ENCODE measurements at regions of chr3 and their contacts with region 1.

Region 1: GRCh38 chr3:112979240-112979832 is 4.4 kb upstream of the CD200R1 start:
- DNase-seq: peak in 3 of 9 experiments; percentile 37 to 72 (median 66)
- ATAC-seq: peak; percentile 37
- H3K4me3 ChIP-seq: no peak overlapping the region
- H3K4me3 Mint-ChIP-seq: no peak overlapping the region
- H3K27ac ChIP-seq: no peak overlapping the region
- H3K27ac Mint-ChIP-seq: no peak overlapping the region
- H3K4me1 ChIP-seq: peaks cover 38% of the 10 kb centered on the region
- H3K4me1 Mint-ChIP-seq: peaks cover 56% of the 10 kb centered on the region
- H3K27me3 ChIP-seq: no peaks in the 10 kb centered on the region
- H3K27me3 Mint-ChIP-seq: no peaks in the 10 kb centered on the region
- CTCF ChIP-seq: peak; percentile 93

Region 2: DNA sequence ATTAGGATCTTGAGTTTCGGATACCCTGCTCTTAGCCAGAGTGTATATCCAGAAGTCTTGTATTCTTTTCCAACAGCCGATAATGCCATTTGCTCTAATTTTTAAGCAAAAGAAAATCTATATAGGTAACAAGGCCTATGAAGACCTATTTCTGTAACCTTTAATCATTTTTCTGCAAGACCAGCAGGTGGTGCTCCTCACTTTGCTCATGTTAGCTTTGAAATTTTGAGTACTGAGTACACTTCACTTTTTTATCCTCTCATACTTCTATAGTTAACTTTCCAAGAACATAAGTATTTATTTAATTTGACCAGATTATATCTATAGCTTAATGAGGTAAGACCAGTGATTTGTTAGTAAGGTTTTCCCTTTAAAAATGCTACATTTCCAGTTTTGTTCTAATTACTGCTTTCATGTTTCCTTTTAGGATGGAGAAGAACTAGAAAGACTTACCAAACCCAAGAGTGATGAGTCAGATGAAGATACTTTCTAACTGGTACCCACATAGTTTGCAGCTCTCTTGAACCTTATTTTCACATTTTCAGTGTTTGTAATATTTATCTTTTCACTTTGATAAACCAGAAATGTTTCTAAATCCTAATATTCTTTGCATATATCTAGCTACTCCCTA is 397.0 kb before region 1 on chr3:
- CTCF ChIA-PET with region 1: interaction called, 4 read pairs
- POLR2A ChIA-PET with region 1: no interaction called
- intact Hi-C with region 1: loop called (anchors 1 to 2 kb)
- DNase-seq: peak in 4 of 9 experiments; percentile 6 to 53 (median 34)
- ATAC-seq: peak; percentile 42
- H3K4me3 ChIP-seq: no peak overlapping the region
- H3K4me3 Mint-ChIP-seq: no peak overlapping the region
- H3K27ac ChIP-seq: no peak overlapping the region
- H3K27ac Mint-ChIP-seq: no peak overlapping the region
- H3K4me1 ChIP-seq: no peaks in the 10 kb centered on the region
- H3K4me1 Mint-ChIP-seq: peaks cover 3% of the 10 kb centered on the region
- H3K27me3 ChIP-seq: no peaks in the 10 kb centered on the region
- H3K27me3 Mint-ChIP-seq: no peaks in the 10 kb centered on the region
- CTCF ChIP-seq: peak; percentile 38

Region 3: DNA sequence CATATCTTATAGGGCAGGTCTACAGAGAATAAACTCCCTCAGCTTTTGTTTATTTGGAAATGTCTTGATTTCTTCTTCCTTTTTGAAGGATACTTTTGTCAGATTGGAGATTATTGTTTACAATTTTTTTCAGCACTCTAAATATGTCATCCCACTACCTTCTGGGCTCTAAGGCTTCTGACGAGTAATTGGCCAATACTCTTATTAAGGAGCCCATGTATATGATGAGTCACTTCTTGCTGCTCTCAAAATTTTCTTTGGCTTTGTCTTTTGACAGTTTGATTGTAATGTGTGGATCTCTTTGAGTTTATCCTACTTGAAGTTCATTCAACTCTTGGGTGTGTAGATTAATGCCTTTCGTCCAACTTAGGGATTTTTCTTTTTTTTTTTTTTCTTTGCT is 103.8 kb before region 1 on chr3:
- CTCF ChIA-PET with region 1: no interaction called
- POLR2A ChIA-PET with region 1: no interaction called
- intact Hi-C with region 1: no loop called
- DNase-seq: no peak
- ATAC-seq: no peak
- H3K4me3 ChIP-seq: no peak overlapping the region
- H3K4me3 Mint-ChIP-seq: no peak overlapping the region
- H3K27ac ChIP-seq: no peak overlapping the region
- H3K27ac Mint-ChIP-seq: no peak overlapping the region
- H3K4me1 ChIP-seq: no peaks in the 10 kb centered on the region
- H3K4me1 Mint-ChIP-seq: no peaks in the 10 kb centered on the region
- H3K27me3 ChIP-seq: no peaks in the 10 kb centered on the region
- H3K27me3 Mint-ChIP-seq: no peaks in the 10 kb centered on the region
- CTCF ChIP-seq: no peak

Region 4: DNA sequence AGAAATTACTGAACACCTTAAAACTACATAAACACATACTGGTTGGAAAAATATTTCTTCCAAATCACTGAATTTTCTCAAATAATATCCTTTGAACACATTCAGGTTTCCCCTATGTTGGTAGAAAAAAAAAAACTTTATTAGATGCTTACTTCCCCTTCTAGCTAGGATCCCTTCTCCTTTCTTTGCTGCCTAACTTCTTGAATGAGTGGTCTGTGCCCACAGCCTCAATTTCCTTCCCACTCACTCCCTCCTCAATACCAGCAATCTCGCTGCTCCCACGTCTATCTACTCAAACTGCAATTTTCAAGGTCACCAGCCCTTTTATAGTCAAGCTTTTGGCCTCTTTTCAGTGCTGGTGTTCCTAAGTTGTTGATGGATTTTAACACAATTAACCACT is 12.7 kb before region 1 on chr3:
- CTCF ChIA-PET with region 1: interaction called, 15 read pairs
- POLR2A ChIA-PET with region 1: interaction called, 4 read pairs
- intact Hi-C with region 1: loop called in 1 of 2 experiments (anchors 1 kb)
- DNase-seq: no peak
- ATAC-seq: no peak
- H3K4me3 ChIP-seq: no peak overlapping the region
- H3K4me3 Mint-ChIP-seq: no peak overlapping the region
- H3K27ac ChIP-seq: no peak overlapping the region
- H3K27ac Mint-ChIP-seq: peak overlapping the region; percentile 68
- H3K4me1 ChIP-seq: peaks cover 31% of the 10 kb centered on the region
- H3K4me1 Mint-ChIP-seq: peaks cover 61% of the 10 kb centered on the region
- H3K27me3 ChIP-seq: no peaks in the 10 kb centered on the region
- H3K27me3 Mint-ChIP-seq: no peaks in the 10 kb centered on the region
- CTCF ChIP-seq: no peak